Activated CD8-positive, alpha-beta T cell treated with anti-CD3 and anti-CD28 coated beads for 36 hours (primary cell): ENCODE measurements at regions of chr11 and their contacts with region 1.

Region 1: DNA sequence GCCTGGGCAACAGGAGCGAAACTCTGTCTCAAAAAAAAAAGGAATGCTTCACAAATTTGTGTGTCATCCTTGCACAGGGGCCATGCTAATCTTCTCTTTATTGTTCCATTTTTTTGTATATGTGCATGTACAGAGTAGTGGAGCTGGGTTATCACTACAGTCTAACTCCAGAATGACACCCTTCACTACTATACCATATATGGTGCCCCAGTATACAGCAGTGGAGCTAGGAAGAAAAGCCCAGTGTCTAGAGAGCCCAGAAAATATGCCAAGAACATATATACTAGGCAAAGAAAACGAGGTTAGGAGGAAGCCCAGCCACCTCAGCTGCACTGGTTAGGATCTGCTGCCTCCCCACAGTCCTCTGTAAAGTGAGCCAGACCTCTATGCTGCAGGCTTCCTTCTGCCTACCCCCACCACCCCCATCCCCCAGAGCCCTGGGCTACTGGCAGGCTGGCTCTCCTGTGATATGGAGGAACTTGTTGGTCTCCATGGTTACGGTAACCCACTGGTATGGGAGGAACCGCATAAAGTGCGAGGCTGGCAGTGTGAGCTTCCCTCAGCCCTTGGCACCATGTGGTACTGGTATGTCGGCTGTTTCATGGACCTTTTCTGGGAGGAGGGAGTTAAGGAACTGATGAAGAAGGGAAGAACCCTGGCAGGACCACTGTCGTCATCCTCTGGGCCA is 34.3 kb downstream of the RCOR2 start:
- DNase-seq: no peak
- ATAC-seq: peak; percentile 41
- H3K4me3 Mint-ChIP-seq: no peak overlapping the region
- H3K27ac Mint-ChIP-seq: peak overlapping the region; percentile 48
- H3K4me1 Mint-ChIP-seq: peaks cover 77% of the 10 kb centered on the region
- H3K27me3 Mint-ChIP-seq: no peaks in the 10 kb centered on the region
- CTCF ChIP-seq: no peak

Region 2: DNA sequence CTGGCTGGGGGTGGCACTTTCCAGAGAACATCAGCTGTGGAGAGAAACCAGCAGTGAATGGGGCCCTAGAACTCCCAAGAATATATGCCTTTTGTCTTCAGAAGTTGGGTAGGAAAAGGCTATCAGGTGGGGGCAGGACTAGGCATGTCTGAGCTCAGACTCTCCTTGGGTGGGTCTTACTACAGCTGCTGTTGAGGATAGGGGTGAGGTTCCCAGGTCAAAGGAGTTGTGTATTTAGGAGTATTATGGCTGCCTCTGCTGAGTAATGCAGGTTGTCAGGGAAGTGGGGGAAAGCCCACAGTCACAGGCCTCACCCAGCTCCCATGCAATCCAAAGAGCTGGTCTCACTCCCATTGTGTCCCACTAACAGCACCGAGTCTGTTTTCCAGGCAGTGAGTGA is 487.0 kb before region 1 on chr11:
- CTCF ChIA-PET with region 1: no interaction called
- POLR2A ChIA-PET with region 1: interaction called, 10 read pairs
- intact Hi-C with region 1: no loop called
- DNase-seq: no peak
- ATAC-seq: no peak
- H3K4me3 Mint-ChIP-seq: no peak overlapping the region
- H3K27ac Mint-ChIP-seq: no peak overlapping the region
- H3K4me1 Mint-ChIP-seq: no peaks in the 10 kb centered on the region
- H3K27me3 Mint-ChIP-seq: peaks cover 47% of the 10 kb centered on the region
- CTCF ChIP-seq: no peak

Region 3: DNA sequence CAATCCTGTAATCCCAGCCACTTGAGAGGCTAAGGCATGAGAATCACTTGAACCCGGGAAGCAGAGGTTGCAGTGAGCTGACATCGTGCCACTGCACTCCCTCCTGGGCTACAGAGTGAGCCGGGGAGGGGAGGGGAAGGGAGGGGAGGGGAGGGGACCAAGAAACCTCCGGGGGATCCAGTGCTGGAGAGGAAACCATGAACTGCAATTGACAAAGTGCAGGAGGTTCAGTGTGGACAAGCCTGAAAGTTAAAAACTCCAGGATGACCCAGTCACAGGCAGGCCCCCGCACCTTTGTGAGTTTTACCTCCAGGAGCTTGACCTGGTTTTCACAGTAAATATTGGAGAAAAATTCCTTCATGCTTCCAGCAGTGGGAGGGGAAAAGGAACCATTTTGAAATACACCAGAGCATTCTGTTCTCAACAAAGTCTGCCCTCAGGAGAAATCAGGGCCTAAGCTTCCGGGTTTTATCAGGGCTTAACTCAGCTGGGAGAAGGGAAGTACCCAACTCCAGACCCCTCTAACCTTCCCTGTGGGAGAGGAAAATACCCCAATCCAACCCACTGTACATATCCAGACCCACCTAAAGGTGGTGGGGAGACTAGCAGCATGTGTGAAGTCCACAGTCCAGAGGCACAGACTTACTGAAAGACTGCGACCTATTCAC is 98.6 kb before region 1 on chr11:
- CTCF ChIA-PET with region 1: no interaction called
- POLR2A ChIA-PET with region 1: no interaction called
- intact Hi-C with region 1: no loop called
- DNase-seq: no peak
- ATAC-seq: no peak
- H3K4me3 Mint-ChIP-seq: no peak overlapping the region
- H3K27ac Mint-ChIP-seq: no peak overlapping the region
- H3K4me1 Mint-ChIP-seq: peaks cover 7% of the 10 kb centered on the region
- H3K27me3 Mint-ChIP-seq: peaks cover 2% of the 10 kb centered on the region
- CTCF ChIP-seq: no peak

Region 4: DNA sequence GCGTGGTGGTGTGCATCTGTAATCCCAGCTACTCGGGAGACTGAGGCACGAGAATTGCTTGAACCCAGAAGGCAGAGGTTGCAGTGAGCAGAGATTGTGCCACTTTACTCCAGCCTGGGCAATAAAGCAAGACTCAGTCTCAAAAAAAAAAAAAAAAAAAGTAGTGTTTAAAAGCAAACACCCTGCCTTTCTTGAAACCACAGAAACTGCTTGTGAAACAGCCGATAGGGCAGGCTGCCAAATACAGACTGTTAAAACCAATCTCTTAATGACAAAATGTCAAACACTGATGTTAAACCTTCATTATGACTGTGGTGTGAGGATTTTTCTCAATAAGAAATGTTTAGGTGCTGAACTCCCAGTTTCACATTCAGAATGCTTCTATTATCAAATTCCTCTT is 16.5 kb before region 1 on chr11:
- CTCF ChIA-PET with region 1: interaction called, 10 read pairs
- POLR2A ChIA-PET with region 1: interaction called, 3 read pairs
- intact Hi-C with region 1: no loop called
- DNase-seq: peak; percentile 95
- ATAC-seq: peak; percentile 83
- H3K4me3 Mint-ChIP-seq: no peak overlapping the region
- H3K27ac Mint-ChIP-seq: peak overlapping the region; percentile 79
- H3K4me1 Mint-ChIP-seq: peaks cover 77% of the 10 kb centered on the region
- H3K27me3 Mint-ChIP-seq: no peaks in the 10 kb centered on the region
- CTCF ChIP-seq: no peak

Region 5: GRCh38 chr11:63871962-63872799 is 10.5 kb before region 1 on chr11:
- CTCF ChIA-PET with region 1: interaction called, 10 read pairs
- POLR2A ChIA-PET with region 1: interaction called, 9 read pairs
- intact Hi-C with region 1: no loop called
- DNase-seq: peak; percentile 61
- ATAC-seq: peak; percentile 85
- H3K4me3 Mint-ChIP-seq: no peak overlapping the region
- H3K27ac Mint-ChIP-seq: peak overlapping the region; percentile 45
- H3K4me1 Mint-ChIP-seq: peaks cover 84% of the 10 kb centered on the region
- H3K27me3 Mint-ChIP-seq: no peaks in the 10 kb centered on the region
- CTCF ChIP-seq: no peak